ENCODE measurements at regions of chr6 and their contacts with region 1.

Region 1: GRCh38 chr6:30781743-30782424 is 37.5 kb upstream of the IER3 start:
- DNase-seq: peak; percentile 91 to 97
- H3K4me3 ChIP-seq: peak overlapping the region; percentile 17; the same call in 1 of the 2 replicates
- H3K27ac ChIP-seq: peak overlapping the region; percentile 93
- H3K4me1 ChIP-seq: peaks cover 51% of the 10 kb centered on the region
- H3K27me3 ChIP-seq: no peaks in the 10 kb centered on the region
- CTCF ChIP-seq: no peak

Region 2: GRCh38 chr6:30769088-30769852 is 12.6 kb before region 1 on chr6:
- CTCF ChIA-PET with region 1: interaction called, 9 read pairs
- POLR2A ChIA-PET with region 1: interaction called, 5 read pairs
- intact Hi-C with region 1: loop called (anchors 2 kb)
- DNase-seq: peak; percentile 92
- H3K4me3 ChIP-seq: peak overlapping the region; percentile 41; the same call in 1 of the 2 replicates
- H3K27ac ChIP-seq: peak overlapping the region; percentile 94
- H3K4me1 ChIP-seq: peaks cover 56% of the 10 kb centered on the region
- H3K27me3 ChIP-seq: no peaks in the 10 kb centered on the region
- CTCF ChIP-seq: no peak

Region 3: GRCh38 chr6:30814136-30815040 is 32.5 kb after region 1 on chr6:
- CTCF ChIA-PET with region 1: interaction called, 10 read pairs
- POLR2A ChIA-PET with region 1: interaction called, 3 read pairs
- intact Hi-C with region 1: loop called (anchors 2 kb)
- DNase-seq: peak; percentile 65 to 84
- H3K4me3 ChIP-seq: peak overlapping the region; percentile 11; the same call in 1 of the 2 replicates
- H3K27ac ChIP-seq: peak overlapping the region; percentile 94
- H3K4me1 ChIP-seq: peaks cover 82% of the 10 kb centered on the region
- H3K27me3 ChIP-seq: no peaks in the 10 kb centered on the region
- CTCF ChIP-seq: no peak

Region 4: DNA sequence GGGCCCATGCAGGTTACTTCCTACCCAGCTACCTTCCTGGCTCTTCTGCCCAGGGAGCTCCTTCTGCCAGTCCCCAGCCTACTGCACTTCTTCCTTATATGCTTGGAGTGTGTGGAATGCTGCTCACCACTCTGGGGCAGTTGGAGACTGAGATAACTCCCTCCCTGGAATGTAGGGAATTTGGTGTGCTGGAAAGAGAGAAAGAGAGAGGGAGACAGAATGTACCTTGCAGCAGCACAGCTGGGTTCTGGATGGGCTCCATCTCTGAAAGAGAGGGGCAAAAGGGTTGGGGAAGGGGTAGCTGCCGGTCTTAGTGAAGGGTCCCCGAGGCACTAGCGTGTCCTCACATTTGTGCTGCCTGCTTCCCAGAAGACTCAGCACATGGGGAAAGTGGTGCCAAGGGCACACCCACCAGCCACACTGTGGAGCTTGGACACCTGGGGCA is 62.2 kb after region 1 on chr6:
- CTCF ChIA-PET with region 1: interaction called, 16 read pairs
- POLR2A ChIA-PET with region 1: no interaction called
- intact Hi-C with region 1: no loop called
- DNase-seq: peak; percentile 53 to 64
- H3K4me3 ChIP-seq: no peak overlapping the region
- H3K27ac ChIP-seq: no peak overlapping the region
- H3K4me1 ChIP-seq: peaks cover 34% of the 10 kb centered on the region
- H3K27me3 ChIP-seq: no peaks in the 10 kb centered on the region
- CTCF ChIP-seq: no peak

Measured in PC-9 (cell line).